ENCODE measurements at regions of chr1 and their contacts with region 1.

Region 1: DNA sequence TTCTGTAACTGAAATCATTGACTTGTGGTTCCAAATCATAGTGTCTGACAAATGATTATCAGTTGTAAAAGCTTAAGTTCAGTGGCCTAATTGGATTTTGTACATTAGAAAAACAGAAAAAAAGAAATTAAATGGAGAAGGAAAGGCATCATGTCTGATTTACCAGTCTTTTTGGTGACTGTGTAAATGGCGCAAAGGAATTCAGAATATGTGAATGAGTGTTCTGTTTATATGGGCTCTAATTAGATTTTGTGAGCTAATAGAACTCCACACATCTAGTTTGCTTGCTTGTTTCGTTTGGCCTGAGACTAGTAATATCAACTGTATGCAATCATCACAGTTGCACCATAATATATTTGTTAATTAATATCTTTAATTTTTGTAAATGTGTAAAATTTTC is 151.7 kb downstream of the PLA2G4A start:
- DNase-seq: no peak
- ATAC-seq: no peak
- H3K4me3 ChIP-seq: no peak overlapping the region
- H3K27ac ChIP-seq: no peak overlapping the region
- H3K4me1 ChIP-seq: peaks cover 11% of the 10 kb centered on the region
- H3K27me3 ChIP-seq: no peaks in the 10 kb centered on the region
- CTCF ChIP-seq: no peak

Region 2: DNA sequence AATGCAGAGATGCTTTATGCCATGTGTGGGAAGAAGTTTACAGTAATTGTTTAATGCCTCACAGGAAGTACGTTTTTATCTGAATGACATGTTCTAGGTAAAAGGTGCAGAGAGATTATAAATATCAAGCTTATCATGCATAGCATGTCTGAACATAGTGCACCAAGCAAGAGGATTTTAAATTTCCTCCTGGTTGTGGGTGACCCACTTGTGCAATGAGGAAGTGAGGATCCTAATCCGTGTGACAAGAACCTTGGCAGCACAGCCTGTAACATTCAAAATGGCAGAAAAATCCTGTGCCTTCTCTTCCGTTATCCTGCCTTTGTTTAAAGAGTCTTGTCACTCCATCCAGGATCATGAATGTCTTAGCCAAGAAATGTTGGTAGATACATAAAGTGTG is 76.0 kb before region 1 on chr1:
- CTCF ChIA-PET with region 1: no interaction called
- POLR2A ChIA-PET with region 1: no interaction called
- intact Hi-C with region 1: no loop called
- DNase-seq: no peak
- ATAC-seq: no peak
- H3K4me3 ChIP-seq: no peak overlapping the region
- H3K27ac ChIP-seq: no peak overlapping the region
- H3K4me1 ChIP-seq: no peaks in the 10 kb centered on the region; the same call in 1 of the 2 replicates
- H3K27me3 ChIP-seq: no peaks in the 10 kb centered on the region
- CTCF ChIP-seq: no peak

Region 3: GRCh38 chr1:186958520-186958919 is 21.9 kb before region 1 on chr1:
- CTCF ChIA-PET with region 1: no interaction called
- POLR2A ChIA-PET with region 1: interaction called, 12 read pairs
- intact Hi-C with region 1: no loop called
- DNase-seq: peak; percentile 65
- ATAC-seq: peak; percentile 88
- H3K4me3 ChIP-seq: no peak overlapping the region
- H3K27ac ChIP-seq: peak overlapping the region; percentile 77
- H3K4me1 ChIP-seq: peaks cover 12% of the 10 kb centered on the region; the same call in 1 of the 2 replicates
- H3K27me3 ChIP-seq: no peaks in the 10 kb centered on the region
- CTCF ChIP-seq: no peak

Measured in PC-3 (cell line).